ENCODE measurements at regions of chr4 and their contacts with region 1.

Region 1: GRCh38 chr4:40736910-40737309 is 12.8 kb upstream of the NSUN7 start:
- DNase-seq: no peak
- H3K4me3 ChIP-seq: no peak overlapping the region
- H3K27ac ChIP-seq: no peak overlapping the region
- H3K4me1 ChIP-seq: no peaks in the 10 kb centered on the region
- H3K27me3 ChIP-seq: no peaks in the 10 kb centered on the region
- CTCF ChIP-seq: peak in 3 of 4 experiments; percentile 33 to 51 (median 47)
- POLR2A ChIP-seq: no peak

Region 2: GRCh38 chr4:40897557-40898203 is 160.8 kb after region 1 on chr4:
- intact Hi-C with region 1: loop called (anchors 10 kb)
- DNase-seq: peak; percentile 43
- H3K4me3 ChIP-seq: no peak overlapping the region
- H3K27ac ChIP-seq: no peak overlapping the region
- H3K4me1 ChIP-seq: no peaks in the 10 kb centered on the region
- H3K27me3 ChIP-seq: no peaks in the 10 kb centered on the region
- CTCF ChIP-seq: peak; percentile 53 to 73 (median 68)
- POLR2A ChIP-seq: no peak

Region 3: DNA sequence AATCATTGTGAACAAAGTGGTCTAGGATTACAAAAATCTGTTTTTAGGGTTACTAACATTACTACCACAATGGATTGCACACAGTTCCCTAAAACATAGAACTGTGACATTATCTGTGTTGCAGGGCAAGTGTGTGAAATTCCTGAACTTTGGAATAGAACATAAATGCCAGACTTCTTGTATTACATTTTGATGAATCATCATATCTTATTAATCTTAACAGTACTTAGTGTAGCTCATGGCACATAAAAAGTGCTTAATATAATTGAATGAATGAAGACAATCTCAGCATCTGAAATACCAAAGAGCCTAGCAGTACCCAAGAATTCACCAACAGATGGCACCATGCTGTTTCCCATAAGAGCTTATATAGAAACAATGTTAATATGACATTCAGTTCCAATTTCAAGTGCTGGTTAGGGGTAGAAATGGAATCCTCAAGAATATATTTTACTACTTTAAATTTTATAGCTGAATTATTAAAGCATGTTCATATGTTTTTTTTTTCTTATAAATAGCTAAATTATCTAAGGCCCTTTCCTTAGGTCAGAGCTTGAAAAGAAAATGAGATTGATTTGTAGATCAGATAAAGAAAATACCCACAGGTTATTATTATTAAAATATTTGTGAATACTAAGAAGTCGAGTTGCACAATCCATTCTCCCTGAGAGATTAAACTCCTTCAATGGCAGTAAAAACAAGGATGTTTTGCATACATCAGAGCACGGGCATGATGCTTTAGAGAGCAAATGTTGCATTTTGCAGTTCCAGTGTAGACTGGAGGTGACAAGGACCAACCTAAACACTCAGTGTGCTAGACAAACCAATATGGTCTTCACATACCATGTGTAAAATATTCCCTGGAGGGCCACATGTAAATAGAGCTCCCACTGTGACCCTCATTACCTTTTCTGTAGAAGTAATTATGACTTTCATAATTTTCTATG is 1634.7 kb after region 1 on chr4:
- intact Hi-C with region 1: no loop called
- DNase-seq: no peak
- H3K4me3 ChIP-seq: no peak overlapping the region
- H3K27ac ChIP-seq: no peak overlapping the region
- H3K4me1 ChIP-seq: no peaks in the 10 kb centered on the region
- H3K27me3 ChIP-seq: no peaks in the 10 kb centered on the region
- CTCF ChIP-seq: peak in 3 of 4 experiments; percentile 31 to 57 (median 56)
- POLR2A ChIP-seq: no peak

Measured in prostate gland (tissue), 2 donors.